ENCODE measurements at regions of chr14 and their contacts with region 1.

Region 1: DNA sequence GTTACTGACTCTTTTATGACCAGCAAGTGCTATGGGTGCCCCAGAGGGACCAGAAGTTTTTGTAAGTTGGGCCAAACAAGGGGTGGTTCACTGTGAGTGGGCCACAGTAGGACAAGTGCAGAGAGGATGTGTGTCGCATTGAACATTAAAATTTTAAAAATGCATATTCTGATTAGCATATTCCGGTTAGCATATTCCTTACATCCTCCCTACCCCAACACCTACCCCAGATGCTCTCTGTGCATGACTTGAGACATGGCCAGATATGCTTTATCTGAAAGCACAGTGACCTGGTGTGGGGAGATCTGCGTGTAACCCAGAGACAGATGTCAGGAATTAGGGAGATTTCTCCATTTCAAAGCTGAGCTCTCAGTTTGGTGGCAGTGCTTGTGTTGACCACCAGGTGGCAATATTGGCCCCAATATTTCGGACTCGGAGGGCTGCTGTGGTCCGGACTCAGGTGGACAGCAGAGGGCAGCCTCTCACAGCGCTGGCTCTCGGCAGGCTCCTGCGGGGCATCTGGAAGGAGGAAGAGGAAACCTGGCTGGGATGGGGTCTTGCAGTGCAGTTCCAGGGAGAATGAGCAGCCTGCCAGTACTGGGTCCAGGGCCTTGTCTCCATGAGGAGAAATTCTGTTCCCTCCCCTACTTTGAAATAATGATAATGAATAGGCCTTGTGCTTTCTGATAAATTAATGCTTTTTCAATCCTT is 1.6 kb upstream of the CEBPE start:
- DNase-seq: peak; percentile 89
- H3K4me3 ChIP-seq: no peak overlapping the region
- H3K27ac ChIP-seq: peak overlapping the region; percentile 81
- H3K4me1 ChIP-seq: peaks cover 21% of the 10 kb centered on the region
- H3K27me3 ChIP-seq: no peaks in the 10 kb centered on the region
- CTCF ChIP-seq: peak; percentile 100
- POLR2A ChIP-seq: no peak

Region 2: DNA sequence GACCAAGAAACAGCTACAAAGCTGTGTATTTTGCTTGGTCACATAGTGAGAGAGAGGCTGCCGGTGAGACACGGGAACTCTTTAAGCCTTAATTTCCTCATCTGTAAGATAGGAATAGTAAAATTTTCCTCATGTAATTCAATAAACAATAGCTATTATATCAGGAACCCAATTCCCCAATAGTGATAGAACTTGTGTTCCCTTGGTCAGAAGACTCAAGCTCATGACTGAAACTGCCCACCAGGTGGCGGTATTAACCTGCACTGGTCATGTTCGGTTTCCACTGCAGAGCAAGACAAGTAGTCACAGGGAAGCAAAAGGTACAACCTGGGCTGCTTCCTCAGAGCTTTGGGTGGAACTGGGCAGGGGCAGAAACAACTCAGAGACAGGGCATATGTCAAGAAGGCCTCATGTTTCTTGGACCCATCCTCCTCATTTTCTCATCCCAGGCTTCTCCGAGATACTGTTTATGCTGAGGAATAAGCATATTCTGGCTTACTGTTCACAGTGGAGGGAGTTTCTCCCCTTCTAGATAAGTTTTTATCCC is 134.1 kb before region 1 on chr14:
- CTCF ChIA-PET with region 1: interaction called, 11 read pairs
- POLR2A ChIA-PET with region 1: no interaction called
- dilution Hi-C with region 1: no loop called
- intact Hi-C with region 1: no loop called
- DNase-seq: peak; percentile 86
- H3K4me3 ChIP-seq: no peak overlapping the region
- H3K27ac ChIP-seq: no peak overlapping the region
- H3K4me1 ChIP-seq: peaks cover 6% of the 10 kb centered on the region
- H3K27me3 ChIP-seq: no peaks in the 10 kb centered on the region
- CTCF ChIP-seq: peak; percentile 78 to 82
- POLR2A ChIP-seq: no peak

Region 3: GRCh38 chr14:23104591-23105347 is 15.9 kb before region 1 on chr14 and contains the start of gene CIROP:
- CTCF ChIA-PET with region 1: interaction called, 59 read pairs
- POLR2A ChIA-PET with region 1: no interaction called
- dilution Hi-C with region 1: no loop called
- intact Hi-C with region 1: no loop called
- DNase-seq: no peak
- H3K4me3 ChIP-seq: no peak within 1 kb of the TSS
- H3K27ac ChIP-seq: no peak within 1 kb of the TSS
- H3K4me1 ChIP-seq: no peaks in the 10 kb centered on the region
- H3K27me3 ChIP-seq: no peaks in the 10 kb centered on the region
- CTCF ChIP-seq: no peak
- POLR2A ChIP-seq: no peak
- total RNA-seq, gene CIROP: not detected in 2 replicates

Region 4: DNA sequence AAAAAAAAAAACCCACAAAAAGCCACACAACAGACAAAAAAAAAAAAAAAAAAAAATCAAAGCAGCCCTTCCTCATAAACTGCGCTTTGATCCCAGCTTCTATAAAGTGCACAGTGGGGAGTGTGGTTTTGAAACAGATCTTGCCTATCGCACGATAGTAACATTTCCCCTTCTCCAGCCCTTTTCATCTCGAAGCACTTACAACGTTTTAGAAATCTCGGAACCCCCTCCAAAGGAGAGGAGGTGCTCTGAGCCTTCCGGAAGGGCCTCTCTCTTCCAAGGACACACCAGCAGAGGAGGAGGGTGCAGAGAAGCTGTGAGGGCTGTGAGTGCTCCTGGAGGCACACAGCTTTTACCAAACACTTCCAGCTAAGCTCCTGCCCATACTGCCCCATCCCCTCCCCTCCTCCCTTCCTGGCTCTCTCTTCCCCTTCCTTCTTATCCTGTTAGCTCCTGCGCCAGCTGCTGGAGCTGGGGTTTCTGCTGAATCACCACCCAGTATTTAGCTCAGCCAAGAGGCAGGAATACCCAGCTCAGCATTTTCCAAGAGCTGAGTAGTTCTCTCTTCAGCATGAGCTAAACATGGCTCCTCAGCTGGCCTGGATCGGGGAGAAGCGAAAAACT is 34.4 kb after region 1 on chr14:
- CTCF ChIA-PET with region 1: interaction called, 34 read pairs
- POLR2A ChIA-PET with region 1: interaction called, 11 read pairs
- dilution Hi-C with region 1: no loop called
- intact Hi-C with region 1: loop called (anchors 1 kb)
- DNase-seq: peak; percentile 85
- H3K4me3 ChIP-seq: no peak overlapping the region
- H3K27ac ChIP-seq: no peak overlapping the region
- H3K4me1 ChIP-seq: peaks cover 17% of the 10 kb centered on the region
- H3K27me3 ChIP-seq: no peaks in the 10 kb centered on the region
- CTCF ChIP-seq: no peak
- POLR2A ChIP-seq: no peak

Region 5: GRCh38 chr14:23202001-23202400 is 81.3 kb after region 1 on chr14:
- CTCF ChIA-PET with region 1: interaction called, 41 read pairs
- POLR2A ChIA-PET with region 1: no interaction called
- dilution Hi-C with region 1: no loop called
- intact Hi-C with region 1: no loop called
- DNase-seq: no peak
- H3K4me3 ChIP-seq: no peak overlapping the region
- H3K27ac ChIP-seq: no peak overlapping the region
- H3K4me1 ChIP-seq: no peaks in the 10 kb centered on the region
- H3K27me3 ChIP-seq: peaks cover 5 to 7% of the 10 kb centered on the region in 2 experiments
- CTCF ChIP-seq: no peak
- POLR2A ChIP-seq: no peak

Region 6: GRCh38 chr14:23286020-23286905 is 165.6 kb after region 1 on chr14 and contains the start of gene HOMEZ:
- CTCF ChIA-PET with region 1: interaction called, 13 read pairs
- POLR2A ChIA-PET with region 1: no interaction called
- dilution Hi-C with region 1: no loop called
- intact Hi-C with region 1: no loop called
- DNase-seq: peak; percentile 99
- H3K4me3 ChIP-seq: peak within 1 kb of the TSS; percentile 79 to 98 (median 94)
- H3K27ac ChIP-seq: peak within 1 kb of the TSS; percentile 65
- H3K4me1 ChIP-seq: peaks cover 21% of the 10 kb centered on the region
- H3K27me3 ChIP-seq: peaks cover 2 to 12% of the 10 kb centered on the region in 2 experiments
- CTCF ChIP-seq: no peak
- POLR2A ChIP-seq: peak; percentile 84
- total RNA-seq, gene HOMEZ: 11.3 and 11.7 TPM in 2 replicates

Region 7: DNA sequence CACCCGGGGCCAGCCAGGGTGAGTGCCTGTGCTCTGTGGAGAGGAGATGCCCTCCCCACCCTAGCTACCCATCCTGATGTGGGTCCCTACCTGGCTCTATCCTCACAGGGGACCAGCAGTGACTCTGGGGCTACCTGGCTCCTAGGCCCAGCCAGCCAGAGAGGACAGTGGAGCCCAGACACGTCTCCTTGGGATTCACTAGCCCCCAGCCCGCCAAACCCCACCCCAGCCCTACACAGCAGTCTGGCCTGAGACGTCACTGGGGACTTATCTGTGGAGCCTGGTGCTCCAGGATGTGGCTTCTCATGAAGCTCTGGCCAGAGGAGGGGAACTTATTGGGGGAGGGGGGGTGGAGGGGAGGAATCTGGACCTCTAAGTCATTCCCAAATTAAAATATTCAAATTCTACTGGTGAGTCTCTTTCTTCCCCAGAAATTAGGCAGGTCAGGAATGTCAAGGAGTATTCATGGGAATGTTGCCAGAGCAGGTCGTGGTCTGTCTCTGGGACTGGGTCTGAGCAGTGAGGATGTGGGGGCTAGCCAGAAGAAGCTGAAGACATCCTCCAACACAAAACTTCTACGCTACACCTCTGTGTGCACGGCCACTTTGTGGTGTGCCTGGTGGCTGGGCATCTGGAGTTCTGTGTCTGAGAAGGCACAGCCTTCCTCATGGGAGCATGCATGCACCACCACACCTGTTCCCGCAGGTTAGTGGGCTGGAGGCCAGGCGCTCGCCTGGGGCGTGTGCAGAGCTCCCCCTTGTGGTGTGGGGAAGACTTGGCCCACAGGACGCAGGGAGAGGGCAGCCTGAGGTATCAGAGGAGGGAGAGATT is 258.9 kb after region 1 on chr14:
- CTCF ChIA-PET with region 1: interaction called, 36 read pairs
- POLR2A ChIA-PET with region 1: no interaction called
- dilution Hi-C with region 1: no loop called
- intact Hi-C with region 1: loop called (anchors 1 kb)
- DNase-seq: peak; percentile 34
- H3K4me3 ChIP-seq: no peak overlapping the region
- H3K27ac ChIP-seq: no peak overlapping the region
- H3K4me1 ChIP-seq: no peaks in the 10 kb centered on the region
- H3K27me3 ChIP-seq: no peaks in the 10 kb centered on the region
- CTCF ChIP-seq: peak; percentile 80 to 92
- POLR2A ChIP-seq: no peak

Region 8: DNA sequence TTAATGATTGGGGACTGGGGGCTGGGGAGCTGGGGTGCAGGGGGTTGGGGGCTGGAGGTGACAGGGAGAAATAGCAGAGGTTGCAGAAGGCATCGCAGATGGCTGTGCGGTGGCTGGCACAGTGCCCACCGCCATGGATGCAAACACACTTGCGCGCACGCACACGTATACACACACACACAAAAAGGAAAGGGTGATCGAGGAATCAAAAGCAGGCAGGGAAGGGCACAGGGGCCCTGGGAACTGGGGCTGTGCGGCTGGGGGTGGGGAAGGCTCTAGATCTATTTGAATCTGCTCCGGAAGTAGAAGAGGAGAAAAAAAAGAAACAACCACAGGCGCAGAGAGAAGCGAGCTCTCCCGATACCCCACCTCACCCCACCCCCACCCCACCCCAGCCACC is 391.5 kb after region 1 on chr14:
- CTCF ChIA-PET with region 1: no interaction called
- POLR2A ChIA-PET with region 1: no interaction called
- dilution Hi-C with region 1: no loop called
- intact Hi-C with region 1: no loop called
- DNase-seq: no peak
- H3K4me3 ChIP-seq: no peak overlapping the region
- H3K27ac ChIP-seq: no peak overlapping the region
- H3K4me1 ChIP-seq: no peaks in the 10 kb centered on the region
- H3K27me3 ChIP-seq: no peaks in the 10 kb centered on the region
- CTCF ChIP-seq: no peak
- POLR2A ChIP-seq: no peak